ENCODE measurements at regions of chr7 and their contacts with region 1.

Region 1: DNA sequence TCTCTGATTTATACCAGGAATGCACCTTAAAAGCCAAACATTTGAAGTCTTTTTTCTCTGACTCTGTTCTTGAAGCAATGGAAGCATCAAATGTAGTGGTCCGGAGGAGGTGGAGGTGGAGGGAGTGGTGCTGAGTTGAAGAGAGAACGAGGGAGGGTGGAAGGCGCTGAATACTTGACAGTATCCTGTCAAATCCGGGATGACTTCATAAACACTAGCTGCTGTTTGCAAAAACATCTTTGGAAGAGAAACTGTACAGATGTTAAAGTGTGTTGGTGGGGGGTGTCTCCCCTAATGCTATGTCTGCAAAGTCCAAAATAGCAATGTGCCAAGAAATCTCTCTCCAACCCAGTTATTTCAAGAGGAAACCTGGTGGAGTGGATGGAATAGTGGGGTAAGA is 328.5 kb upstream of the AUTS2 start:
- DNase-seq: no peak
- H3K4me3 ChIP-seq: no peak overlapping the region
- H3K27ac ChIP-seq: no peak overlapping the region
- H3K4me1 ChIP-seq: no peaks in the 10 kb centered on the region
- H3K27me3 ChIP-seq: no peaks in the 10 kb centered on the region
- CTCF ChIP-seq: no peak

Region 2: GRCh38 chr7:69598081-69598486 is 328.3 kb after region 1 on chr7 and contains the start of gene AUTS2:
- CTCF ChIA-PET with region 1: no interaction called
- POLR2A ChIA-PET with region 1: interaction called, 13 read pairs
- intact Hi-C with region 1: no loop called
- DNase-seq: peak; percentile 97
- H3K4me3 ChIP-seq: peak within 1 kb of the TSS; percentile 81
- H3K27ac ChIP-seq: peak within 1 kb of the TSS; percentile 66
- H3K4me1 ChIP-seq: peaks cover 10% of the 10 kb centered on the region
- H3K27me3 ChIP-seq: no peaks in the 10 kb centered on the region
- CTCF ChIP-seq: no peak
- total RNA-seq, gene AUTS2: 42.1 and 44.3 TPM in 2 replicates

Measured in A673 (cell line).